Breast epithelium (tissue), 4 donors: ENCODE measurements at regions of chr5 and their contacts with region 1.

Region 1: GRCh38 chr5:87829217-87829551 is 416.5 kb upstream of the CCNH start:
- DNase-seq: peak; percentile 29 to 68
- H3K4me3 ChIP-seq: no peak overlapping the region
- H3K27ac ChIP-seq: no peak overlapping the region
- H3K4me1 ChIP-seq: no peaks in the 10 kb centered on the region
- H3K27me3 ChIP-seq: no peaks in the 10 kb centered on the region
- CTCF ChIP-seq: no peak
- POLR2A ChIP-seq: no peak

Region 2: GRCh38 chr5:87949676-87950631 is 120.8 kb after region 1 on chr5:
- intact Hi-C with region 1: no loop called
- DNase-seq: no peak
- H3K4me3 ChIP-seq: no peak overlapping the region
- H3K27ac ChIP-seq: no peak overlapping the region
- H3K4me1 ChIP-seq: no peaks in the 10 kb centered on the region
- H3K27me3 ChIP-seq: no peaks in the 10 kb centered on the region
- CTCF ChIP-seq: no peak
- POLR2A ChIP-seq: no peak

Region 3: DNA sequence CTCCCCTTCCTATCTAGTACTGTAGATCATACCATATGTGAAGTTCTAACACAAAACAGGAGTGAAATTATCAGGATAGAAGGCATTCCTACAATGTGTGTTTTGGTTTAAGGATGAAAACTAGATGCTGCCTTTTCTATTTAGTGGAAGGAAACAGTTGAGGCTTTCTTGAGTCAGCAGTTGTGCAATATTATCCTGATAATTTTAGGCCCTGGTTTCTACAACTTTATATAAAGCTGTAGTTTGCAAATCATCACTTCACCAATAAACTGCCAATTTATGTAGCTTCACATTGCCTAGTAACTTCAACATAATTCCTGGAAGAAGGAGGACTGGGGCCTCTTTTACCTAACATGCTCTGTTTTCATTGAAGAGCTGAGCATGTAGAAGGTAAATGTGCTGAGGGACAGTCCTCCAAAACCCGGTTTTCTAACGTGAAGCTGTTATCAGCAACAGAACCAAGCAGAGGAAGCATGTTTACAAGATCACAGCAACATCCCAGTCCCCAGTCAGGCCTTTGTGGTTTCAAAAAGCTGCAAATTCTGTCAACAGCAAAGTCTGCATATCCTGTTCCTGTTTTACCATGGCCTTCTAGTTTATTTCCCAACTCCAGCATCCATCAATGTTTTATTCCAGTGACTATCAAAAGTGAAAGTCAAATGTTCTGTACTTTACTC is 1567.2 kb after region 1 on chr5:
- intact Hi-C with region 1: loop called (anchors 10 kb)
- DNase-seq: no peak
- H3K4me3 ChIP-seq: no peak overlapping the region
- H3K27ac ChIP-seq: peak overlapping the region in 1 of 2 donors; percentile 10
- H3K4me1 ChIP-seq: no peaks in the 10 kb centered on the region
- H3K27me3 ChIP-seq: no peaks in the 10 kb centered on the region
- CTCF ChIP-seq: no peak
- POLR2A ChIP-seq: no peak